MCF 10A (cell line): ENCODE measurements at regions of chr1 and their contacts with region 1.

Region 1: DNA sequence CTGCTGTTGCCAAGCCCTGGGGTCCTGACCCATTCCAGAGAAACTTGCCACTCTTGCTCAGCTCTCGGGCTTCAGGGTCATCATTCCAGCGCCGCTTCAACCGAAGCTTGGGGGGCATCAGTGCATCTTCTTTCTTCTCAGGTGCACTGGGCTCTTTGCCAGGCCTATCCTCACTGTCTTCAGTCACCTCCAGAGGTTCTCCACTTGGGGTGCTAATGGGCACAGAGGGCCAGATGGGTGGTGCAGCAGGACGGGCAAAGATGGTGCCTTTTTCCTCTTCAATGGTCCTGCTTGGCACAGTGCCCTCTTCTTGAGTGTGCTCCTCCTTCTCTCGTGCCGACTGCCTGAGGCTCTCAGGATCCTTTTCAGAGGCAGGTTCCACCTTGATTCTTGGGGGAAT is 13.3 kb downstream of the ETV3 start:
- DNase-seq: peak; percentile 17
- H3K4me3 Mint-ChIP-seq: no peak overlapping the region
- H3K27ac Mint-ChIP-seq: no peak overlapping the region
- H3K4me1 Mint-ChIP-seq: no peaks in the 10 kb centered on the region
- H3K27me3 Mint-ChIP-seq: no peaks in the 10 kb centered on the region
- CTCF ChIP-seq: no peak

Region 2: DNA sequence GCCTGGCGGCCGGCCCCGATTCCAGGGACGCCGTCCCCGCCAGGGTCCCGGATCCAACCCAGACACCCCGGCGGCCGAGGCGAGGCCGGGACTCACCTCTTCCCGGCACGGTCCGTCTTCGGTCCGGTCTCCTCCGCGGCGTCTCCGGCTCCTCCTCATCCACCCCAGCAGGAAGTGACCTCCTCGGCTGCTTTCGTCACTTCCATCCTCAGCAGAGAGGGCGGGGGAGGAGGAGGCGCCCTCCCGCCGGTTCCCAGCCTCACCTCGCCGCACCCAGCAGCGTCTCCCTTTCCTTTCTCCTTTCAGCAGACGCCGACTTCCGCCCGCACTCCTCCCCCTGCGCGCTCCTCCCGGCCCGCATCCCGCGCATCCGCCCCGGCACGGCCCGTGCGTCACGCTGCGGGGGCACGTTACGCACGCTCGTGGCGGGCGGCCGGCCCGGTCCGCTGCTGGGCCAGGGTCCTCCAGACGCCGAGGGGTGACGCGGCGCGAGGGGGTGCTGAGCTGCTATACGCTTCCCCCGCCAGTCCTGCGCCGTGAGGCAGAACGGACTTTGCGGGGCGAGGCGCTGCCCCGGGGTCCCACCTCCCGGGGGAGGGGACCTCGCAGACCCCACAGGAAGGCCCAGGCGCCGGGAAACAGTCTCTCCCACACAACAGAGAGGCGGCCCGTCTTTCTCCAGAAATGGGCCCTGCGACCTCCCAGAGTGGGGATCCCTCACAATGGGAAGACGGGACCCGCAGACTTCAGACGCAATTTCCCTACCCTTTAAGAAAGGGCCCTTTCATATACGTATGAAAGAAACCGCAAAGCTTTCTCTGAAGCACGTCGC is 13.6 kb after region 1 on chr1 and contains the start of gene ETV3:
- CTCF ChIA-PET with region 1: interaction called, 13 read pairs
- POLR2A ChIA-PET with region 1: interaction called, 6 read pairs
- intact Hi-C with region 1: no loop called
- DNase-seq: peak; percentile 97
- H3K4me3 Mint-ChIP-seq: peak within 1 kb of the TSS; percentile 79
- H3K27ac Mint-ChIP-seq: peak within 1 kb of the TSS; percentile 76
- H3K4me1 Mint-ChIP-seq: peaks cover 29% of the 10 kb centered on the region
- H3K27me3 Mint-ChIP-seq: no peaks in the 10 kb centered on the region
- CTCF ChIP-seq: no peak
- total RNA-seq, gene ETV3: 28.6 and 35.0 TPM in 2 replicates

Region 3: GRCh38 chr1:157916887-157917570 is 792.2 kb after region 1 on chr1:
- CTCF ChIA-PET with region 1: no interaction called
- POLR2A ChIA-PET with region 1: no interaction called
- intact Hi-C with region 1: no loop called
- DNase-seq: no peak
- H3K4me3 Mint-ChIP-seq: no peak overlapping the region
- H3K27ac Mint-ChIP-seq: no peak overlapping the region
- H3K4me1 Mint-ChIP-seq: no peaks in the 10 kb centered on the region
- H3K27me3 Mint-ChIP-seq: peaks cover 91% of the 10 kb centered on the region
- CTCF ChIP-seq: no peak